Activated T-helper 1 cell treated with anti-CD3 and anti-CD28 coated beads, Interleukin-12 subunit alpha, Interleukin-12 subunit beta, Interleukin-2, Interleukin-4 antibody, amounts not matched to agents 30 ng/mL and 10 ng/mL and 1 ng/mL, durations not matched to agents 14 hours and 24 hours and 36 hours (primary cell): ENCODE measurements at regions of chr12 and their contacts with region 1.

Region 1: DNA sequence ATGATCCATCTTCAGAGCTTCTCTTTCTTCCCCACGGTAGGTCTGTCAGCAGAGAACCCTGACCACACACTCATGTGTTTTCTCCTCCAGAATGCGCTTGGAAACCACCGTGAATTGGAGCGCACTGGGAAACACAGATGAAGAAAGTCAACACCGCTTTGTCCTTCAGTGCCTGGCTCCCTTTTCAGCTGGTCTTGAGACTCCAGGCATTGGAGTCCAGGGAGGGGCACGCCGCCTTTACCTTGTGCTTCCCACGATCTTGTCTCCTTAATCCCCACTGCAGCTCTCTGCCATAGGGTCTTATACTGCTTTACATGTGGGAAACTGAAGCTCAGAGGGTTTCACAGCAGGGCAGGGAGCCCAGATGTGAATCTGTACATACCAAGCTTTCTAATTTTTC is 1.1 kb downstream of the FAM90A1 start:
- DNase-seq: no peak
- H3K4me3 Mint-ChIP-seq: no peak overlapping the region
- H3K27ac Mint-ChIP-seq: no peak overlapping the region
- H3K4me1 Mint-ChIP-seq: no peaks in the 10 kb centered on the region
- H3K27me3 Mint-ChIP-seq: no peaks in the 10 kb centered on the region

Region 2: GRCh38 chr12:7869127-7869526 is 357.2 kb before region 1 on chr12:
- intact Hi-C with region 1: loop called (anchors 10 kb)
- DNase-seq: no peak
- H3K4me3 Mint-ChIP-seq: no peak overlapping the region
- H3K27ac Mint-ChIP-seq: no peak overlapping the region
- H3K4me1 Mint-ChIP-seq: no peaks in the 10 kb centered on the region
- H3K27me3 Mint-ChIP-seq: peaks cover 40% of the 10 kb centered on the region

Region 3: DNA sequence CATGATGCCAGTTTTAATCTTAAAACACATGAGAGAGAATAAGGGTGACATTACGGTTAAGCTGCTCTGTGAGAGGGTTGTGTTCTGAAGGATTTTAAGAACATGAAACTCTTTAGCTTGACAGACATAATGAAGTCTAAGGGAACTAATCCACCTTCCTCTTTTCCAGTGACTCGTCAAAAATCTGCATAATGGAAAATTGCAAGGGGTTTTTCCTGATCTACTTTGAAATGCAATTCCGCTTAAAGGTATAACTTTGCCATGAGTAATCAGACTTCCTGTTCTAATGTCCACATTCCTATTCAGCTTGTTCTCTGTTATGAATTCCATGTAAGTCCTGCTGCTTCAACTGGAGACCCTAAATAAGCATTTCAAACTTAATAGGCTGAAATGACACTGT is 69.5 kb before region 1 on chr12 and contains the start of gene ZNF705A:
- intact Hi-C with region 1: no loop called
- DNase-seq: no peak
- H3K4me3 Mint-ChIP-seq: no peak within 1 kb of the TSS
- H3K27ac Mint-ChIP-seq: no peak within 1 kb of the TSS
- H3K4me1 Mint-ChIP-seq: peaks cover 12% of the 10 kb centered on the region
- H3K27me3 Mint-ChIP-seq: peaks cover 28% of the 10 kb centered on the region
- total RNA-seq, gene ZNF705A: not detected in 2 replicates